CD4-positive, alpha-beta T cell (primary cell): ENCODE measurements at regions of chr9 and their contacts with region 1.

Region 1: DNA sequence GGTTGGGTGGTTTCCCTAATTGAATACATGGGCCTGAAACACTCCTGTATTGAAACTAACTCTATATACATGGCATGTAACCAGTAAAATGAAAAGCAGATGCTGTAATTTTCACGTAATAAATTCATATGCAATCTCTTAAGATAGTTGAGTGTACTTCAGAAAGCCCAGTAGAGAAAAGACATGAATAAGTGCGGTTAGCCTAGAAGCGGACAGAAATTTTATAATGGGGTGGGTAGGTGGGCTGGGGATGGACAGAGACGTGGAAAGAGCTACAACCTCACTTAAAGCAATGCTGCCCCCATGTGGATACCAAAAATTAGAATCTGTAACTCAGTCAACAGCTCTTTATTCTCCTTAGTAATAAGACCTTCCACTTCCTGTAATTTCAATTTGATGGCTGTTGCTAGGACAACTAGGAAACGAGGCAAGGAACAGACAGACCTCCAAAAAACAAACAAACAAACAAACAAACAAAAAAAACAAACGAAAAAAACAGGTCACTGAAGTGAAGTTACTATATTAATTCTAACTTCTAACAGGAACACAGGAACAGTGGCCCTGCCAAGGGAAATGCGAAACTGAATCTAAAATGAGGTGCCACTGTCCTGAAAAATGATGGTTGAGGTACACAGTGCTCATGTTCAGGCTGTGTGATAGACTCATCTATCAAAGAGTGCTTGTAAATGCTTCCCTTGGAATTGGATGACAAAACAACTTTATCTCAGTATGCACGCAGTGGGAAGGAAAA is 103.4 kb upstream of the GNA14 start:
- DNase-seq: peak in 4 of 14 experiments; percentile 24 to 47 (median 39)
- ATAC-seq: no peak
- H3K4me3 ChIP-seq: no peak overlapping the region
- H3K4me3 Mint-ChIP-seq: no peak overlapping the region
- H3K27ac ChIP-seq: no peak overlapping the region
- H3K27ac Mint-ChIP-seq: no peak overlapping the region
- H3K4me1 ChIP-seq: no peaks in the 10 kb centered on the region
- H3K4me1 Mint-ChIP-seq: peaks cover 32% of the 10 kb centered on the region
- H3K27me3 ChIP-seq: no peaks in the 10 kb centered on the region
- H3K27me3 Mint-ChIP-seq: no peaks in the 10 kb centered on the region
- CTCF ChIP-seq: peak; percentile 38

Region 2: DNA sequence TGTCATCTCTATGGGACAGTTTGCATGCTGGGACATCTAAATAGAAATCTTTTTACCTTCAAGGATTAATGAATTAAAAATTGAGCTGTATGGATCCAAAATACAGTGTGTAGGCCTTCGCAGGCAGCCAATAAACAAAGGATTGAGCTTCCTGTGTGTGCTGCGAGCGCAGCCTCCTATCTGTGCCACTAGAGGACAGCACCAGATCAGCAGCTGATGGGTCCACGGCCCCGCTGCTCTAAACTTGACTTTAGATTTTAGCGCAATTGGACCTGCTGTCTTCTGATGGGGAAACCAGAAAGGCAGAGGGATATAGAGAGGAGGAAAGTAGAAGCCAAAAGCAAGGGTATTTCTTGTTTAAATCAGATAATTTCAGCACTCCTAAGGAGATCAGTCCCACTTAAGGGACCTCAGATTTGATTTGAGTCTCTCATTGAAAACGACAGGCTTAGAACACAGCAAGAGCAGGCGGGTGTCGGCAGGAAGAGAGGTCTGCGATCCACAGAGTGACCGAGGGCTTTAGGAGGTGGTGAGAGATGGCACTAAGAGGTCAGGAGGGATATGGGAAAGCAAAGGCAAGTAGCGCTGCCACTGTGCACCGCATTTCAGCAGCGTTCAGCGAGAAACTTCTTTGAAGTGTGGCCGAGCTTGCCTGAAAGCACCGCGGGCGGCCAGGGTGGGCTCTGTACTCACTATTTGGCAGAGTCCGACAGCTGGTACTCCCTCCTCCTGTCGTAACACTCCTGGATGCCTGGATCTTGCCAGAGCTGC is 317.7 kb before region 1 on chr9:
- CTCF ChIA-PET with region 1: interaction called, 3 read pairs
- POLR2A ChIA-PET with region 1: no interaction called
- intact Hi-C with region 1: loop called in 1 of 2 experiments (anchors 5 kb)
- DNase-seq: peak; percentile 14 to 71 (median 38)
- ATAC-seq: peak; percentile 91
- H3K4me3 ChIP-seq: no peak overlapping the region
- H3K4me3 Mint-ChIP-seq: no peak overlapping the region
- H3K27ac ChIP-seq: no peak overlapping the region
- H3K27ac Mint-ChIP-seq: no peak overlapping the region
- H3K4me1 ChIP-seq: peaks cover 5% of the 10 kb centered on the region
- H3K4me1 Mint-ChIP-seq: peaks cover 5% of the 10 kb centered on the region
- H3K27me3 ChIP-seq: no peaks in the 10 kb centered on the region
- H3K27me3 Mint-ChIP-seq: peaks cover 5% of the 10 kb centered on the region
- CTCF ChIP-seq: peak; percentile 92